OCI-LY7 (cell line): ENCODE measurements at regions of chr13 and their contacts with region 1.

Region 1: DNA sequence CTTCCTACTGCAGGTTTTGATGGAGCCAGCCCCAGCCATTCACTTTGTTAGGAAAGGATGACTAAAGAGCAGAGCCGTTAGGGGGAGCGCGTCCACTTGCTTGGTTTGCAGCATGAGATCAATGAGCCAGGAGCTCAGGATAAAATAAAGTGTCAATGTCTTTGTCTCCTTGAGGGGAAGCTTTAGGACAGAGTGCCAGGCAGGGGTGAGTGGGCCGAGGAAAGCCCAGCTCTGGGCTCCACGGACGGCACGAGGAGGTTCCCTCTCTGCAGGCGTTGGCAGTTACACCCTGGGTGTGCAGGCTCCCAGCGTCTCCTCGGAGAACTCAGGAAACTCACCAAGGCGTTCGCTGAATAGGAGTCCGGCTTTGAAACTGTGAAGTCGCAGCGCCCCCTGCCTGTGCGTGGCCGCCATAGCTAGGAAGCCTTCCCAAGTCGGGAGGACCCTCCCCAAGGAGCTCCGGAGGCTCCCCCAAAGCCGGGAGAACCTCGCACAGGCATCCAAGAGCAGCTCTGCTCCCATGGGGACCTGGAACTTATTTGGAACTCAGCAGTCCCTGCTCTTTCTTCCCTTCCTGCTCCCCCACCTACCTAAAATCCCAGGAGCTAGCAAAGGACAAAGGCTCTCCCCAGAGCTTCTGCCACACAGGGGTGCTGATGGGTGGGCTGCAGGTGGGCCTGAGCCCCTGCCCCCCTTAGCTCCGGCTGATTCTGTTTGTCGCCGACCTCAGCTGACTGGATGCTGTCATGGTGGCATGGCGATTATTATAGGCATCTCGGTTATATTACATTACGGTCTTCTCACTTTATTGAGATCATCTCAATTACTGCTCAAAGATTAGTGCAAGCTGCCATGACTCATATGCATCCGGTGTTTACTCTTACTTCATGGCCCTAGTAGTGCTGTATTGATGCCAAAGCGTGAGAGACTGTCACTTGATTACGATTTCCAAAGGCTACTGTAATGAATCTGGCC is 34.4 kb downstream of the GSX1 start:
- DNase-seq: peak; percentile 79
- H3K4me3 ChIP-seq: peak overlapping the region; percentile 42
- H3K27ac ChIP-seq: no peak overlapping the region
- H3K4me1 ChIP-seq: no peaks in the 10 kb centered on the region
- CTCF ChIP-seq: peak; percentile 96

Region 2: DNA sequence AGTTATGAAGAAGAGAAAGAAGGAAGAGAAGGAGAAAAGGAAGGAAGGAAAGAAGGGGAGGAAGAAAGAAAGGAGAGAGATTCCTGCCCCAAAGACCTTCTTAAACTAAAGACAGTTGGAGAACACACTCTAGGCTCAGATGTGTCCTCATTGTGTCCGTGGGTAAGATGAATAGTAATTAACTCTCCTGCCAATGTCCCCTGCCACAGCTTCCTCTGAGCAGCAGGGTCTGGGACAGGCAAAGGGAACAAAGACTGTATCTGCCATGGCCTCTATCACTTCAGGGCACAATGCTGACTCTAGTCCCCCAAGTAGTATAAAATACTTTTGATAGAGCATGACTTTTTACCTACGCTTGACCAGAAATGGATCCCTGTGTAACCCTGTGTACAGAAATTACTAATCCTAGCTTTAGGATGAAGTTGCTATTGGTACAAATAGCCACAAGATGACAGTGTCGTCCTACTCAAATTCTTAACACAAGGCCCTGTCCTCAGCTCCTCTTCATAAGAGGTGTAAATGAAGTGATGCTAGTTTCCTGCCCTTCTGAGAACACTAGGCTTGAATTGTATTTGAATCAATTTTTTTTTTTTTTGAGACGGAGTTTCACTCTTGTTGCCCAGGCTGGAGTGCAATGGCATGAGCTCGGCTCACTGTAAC is 879.9 kb before region 1 on chr13:
- CTCF ChIA-PET with region 1: no interaction called
- POLR2A ChIA-PET with region 1: no interaction called
- intact Hi-C with region 1: loop called (anchors 10 kb)
- DNase-seq: peak; percentile 65
- H3K4me3 ChIP-seq: no peak overlapping the region
- H3K27ac ChIP-seq: no peak overlapping the region
- H3K4me1 ChIP-seq: no peaks in the 10 kb centered on the region
- CTCF ChIP-seq: peak; percentile 81

Region 3: GRCh38 chr13:27362064-27362883 is 464.4 kb before region 1 on chr13:
- CTCF ChIA-PET with region 1: interaction called, 10 read pairs
- POLR2A ChIA-PET with region 1: no interaction called
- intact Hi-C with region 1: loop called (anchors 1 kb)
- DNase-seq: peak; percentile 79
- H3K4me3 ChIP-seq: peak overlapping the region; percentile 52
- H3K27ac ChIP-seq: no peak overlapping the region
- H3K4me1 ChIP-seq: no peaks in the 10 kb centered on the region
- CTCF ChIP-seq: peak; percentile 92

Region 4: GRCh38 chr13:27406178-27406939 is 420.3 kb before region 1 on chr13:
- CTCF ChIA-PET with region 1: interaction called, 4 read pairs
- POLR2A ChIA-PET with region 1: no interaction called
- intact Hi-C with region 1: loop called (anchors 1 kb)
- DNase-seq: peak; percentile 68
- H3K4me3 ChIP-seq: no peak overlapping the region
- H3K27ac ChIP-seq: no peak overlapping the region
- H3K4me1 ChIP-seq: no peaks in the 10 kb centered on the region
- CTCF ChIP-seq: peak; percentile 83

Region 5: GRCh38 chr13:27533155-27533643 is 293.5 kb before region 1 on chr13:
- CTCF ChIA-PET with region 1: interaction called, 3 read pairs
- POLR2A ChIA-PET with region 1: no interaction called
- intact Hi-C with region 1: loop called (anchors 5 kb)
- DNase-seq: peak; percentile 14
- H3K4me3 ChIP-seq: no peak overlapping the region
- H3K27ac ChIP-seq: no peak overlapping the region
- H3K4me1 ChIP-seq: no peaks in the 10 kb centered on the region
- CTCF ChIP-seq: peak; percentile 78

Region 6: GRCh38 chr13:27980280-27980998 is 153.8 kb after region 1 on chr13:
- CTCF ChIA-PET with region 1: interaction called, 7 read pairs
- POLR2A ChIA-PET with region 1: no interaction called
- intact Hi-C with region 1: loop called (anchors 1 kb)
- DNase-seq: no peak
- H3K4me3 ChIP-seq: no peak overlapping the region
- H3K27ac ChIP-seq: no peak overlapping the region
- H3K4me1 ChIP-seq: no peaks in the 10 kb centered on the region
- CTCF ChIP-seq: no peak

Region 7: DNA sequence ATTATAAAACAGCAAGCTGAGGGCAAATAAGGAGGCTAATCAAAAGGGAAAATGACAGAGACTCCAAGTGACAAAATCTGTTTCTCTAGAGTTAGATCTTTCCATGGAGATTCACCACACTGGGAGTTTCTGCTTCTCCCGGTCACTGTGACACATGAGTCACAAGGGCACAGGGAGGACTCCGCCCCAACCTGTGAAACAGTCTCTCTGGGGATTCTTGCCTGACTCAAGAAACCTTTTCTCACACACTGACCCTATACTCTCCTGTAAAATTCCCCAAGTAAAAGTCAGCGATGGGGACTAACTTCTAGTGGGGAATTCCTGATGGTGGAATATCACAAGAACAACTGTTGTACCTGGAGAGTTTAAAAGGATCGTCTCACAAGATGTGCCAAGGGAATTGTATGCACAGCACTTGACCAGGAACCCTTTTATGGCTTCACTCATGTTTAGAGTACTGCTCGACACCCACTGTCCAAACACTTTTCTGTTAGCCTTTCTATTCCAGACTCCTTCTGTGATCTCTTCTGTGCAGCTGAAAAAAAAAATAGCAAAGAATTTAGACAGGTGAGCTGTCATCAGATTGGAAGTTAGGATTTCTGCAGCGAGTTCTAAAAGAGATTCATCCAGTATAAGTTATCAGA is 208.6 kb after region 1 on chr13:
- CTCF ChIA-PET with region 1: no interaction called
- POLR2A ChIA-PET with region 1: no interaction called
- intact Hi-C with region 1: no loop called
- DNase-seq: no peak
- H3K4me3 ChIP-seq: no peak overlapping the region
- H3K27ac ChIP-seq: no peak overlapping the region
- H3K4me1 ChIP-seq: peaks cover 5% of the 10 kb centered on the region
- CTCF ChIP-seq: no peak